ENCODE measurements at regions of chr10 and their contacts with region 1.

Region 1: GRCh38 chr10:119892188-119893065 is at the start of gene SEC23IP:
- DNase-seq: peak; percentile 93 to 98
- ATAC-seq: peak; percentile 97 to 99
- H3K4me3 ChIP-seq: peak within 1 kb of the TSS; percentile 98
- H3K27ac ChIP-seq: peak within 1 kb of the TSS; percentile 90 to 97
- H3K4me1 ChIP-seq: peaks cover 40% of the 10 kb centered on the region
- CTCF ChIP-seq: no peak
- EP300 ChIP-seq: no peak
- POLR2A ChIP-seq: peak; percentile 91
- RAD21 ChIP-seq: no peak
- polyA plus RNA-seq, gene SEC23IP: 62.5 and 75.6 TPM in 2 replicates

Region 2: DNA sequence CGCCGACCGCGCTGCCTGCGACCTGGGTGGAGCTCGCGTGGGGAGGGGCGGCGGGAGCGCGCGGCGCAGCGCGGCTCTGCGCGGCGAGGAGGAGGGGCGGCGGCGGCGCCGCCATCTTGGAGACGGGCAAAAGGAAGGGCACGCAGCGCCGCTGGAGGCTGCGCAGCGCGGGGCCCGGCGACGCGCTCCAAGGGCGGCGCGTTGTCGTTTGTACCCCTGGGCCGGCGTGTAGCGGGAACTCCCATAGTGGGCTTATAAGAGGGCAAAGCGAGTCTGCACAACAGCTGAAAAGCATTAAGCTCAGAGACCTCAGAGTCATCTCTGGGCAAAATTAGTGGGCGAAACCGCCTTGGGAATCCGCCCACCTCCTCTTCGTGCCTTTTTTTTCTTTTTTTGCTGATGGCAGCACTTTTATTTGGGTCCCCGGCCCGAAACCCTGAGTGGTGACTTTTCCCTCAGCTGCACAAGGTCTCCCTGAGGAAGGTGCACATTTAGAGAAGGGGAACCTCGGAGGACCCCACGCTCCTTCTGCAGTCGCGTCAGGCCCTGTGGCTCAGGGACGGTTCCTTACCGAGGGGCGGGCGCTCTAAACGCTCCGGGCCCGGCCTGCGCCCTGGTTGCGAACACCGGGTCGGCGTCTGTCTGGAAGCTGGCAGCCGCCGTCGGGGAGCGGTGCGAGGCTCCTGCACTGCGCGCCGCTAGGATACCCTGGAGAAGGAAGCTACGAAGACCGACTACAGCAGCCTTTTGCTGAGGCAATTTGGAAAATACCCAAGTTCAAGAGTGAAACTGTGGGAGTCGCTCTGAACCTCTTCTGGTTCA is 19.4 kb before region 1 on chr10:
- CTCF ChIA-PET with region 1: interaction called, 5 read pairs
- POLR2A ChIA-PET with region 1: interaction called, 44 read pairs
- DNase-seq: peak; percentile 49 to 86
- ATAC-seq: peak; percentile 90 to 97
- H3K4me3 ChIP-seq: peak overlapping the region; percentile 83
- H3K27ac ChIP-seq: peak overlapping the region; percentile 94 to 98
- H3K4me1 ChIP-seq: peaks cover 21% of the 10 kb centered on the region; the same call in 2 of the 3 replicates
- CTCF ChIP-seq: no peak
- EP300 ChIP-seq: no peak
- POLR2A ChIP-seq: peak; percentile 69
- RAD21 ChIP-seq: no peak

Region 3: GRCh38 chr10:119878524-119878923 is 13.9 kb before region 1 on chr10:
- CTCF ChIA-PET with region 1: interaction called, 3 read pairs
- POLR2A ChIA-PET with region 1: interaction called, 44 read pairs
- DNase-seq: no peak
- ATAC-seq: no peak
- H3K4me3 ChIP-seq: no peak overlapping the region
- H3K27ac ChIP-seq: no peak overlapping the region
- H3K4me1 ChIP-seq: peaks cover 4% of the 10 kb centered on the region; the same call in 2 of the 3 replicates
- CTCF ChIP-seq: no peak
- EP300 ChIP-seq: no peak
- POLR2A ChIP-seq: no peak
- RAD21 ChIP-seq: no peak